ENCODE measurements at regions of chr11 and their contacts with region 1.

Region 1: GRCh38 chr11:113730887-113731726 is 25.0 kb upstream of the TMPRSS5 start:
- DNase-seq: peak; percentile 55
- H3K4me3 ChIP-seq: no peak overlapping the region
- H3K27ac ChIP-seq: no peak overlapping the region
- H3K4me1 ChIP-seq: peaks cover 19% of the 10 kb centered on the region
- H3K27me3 ChIP-seq: no peaks in the 10 kb centered on the region
- CTCF ChIP-seq: peak; percentile 67 to 85

Region 2: DNA sequence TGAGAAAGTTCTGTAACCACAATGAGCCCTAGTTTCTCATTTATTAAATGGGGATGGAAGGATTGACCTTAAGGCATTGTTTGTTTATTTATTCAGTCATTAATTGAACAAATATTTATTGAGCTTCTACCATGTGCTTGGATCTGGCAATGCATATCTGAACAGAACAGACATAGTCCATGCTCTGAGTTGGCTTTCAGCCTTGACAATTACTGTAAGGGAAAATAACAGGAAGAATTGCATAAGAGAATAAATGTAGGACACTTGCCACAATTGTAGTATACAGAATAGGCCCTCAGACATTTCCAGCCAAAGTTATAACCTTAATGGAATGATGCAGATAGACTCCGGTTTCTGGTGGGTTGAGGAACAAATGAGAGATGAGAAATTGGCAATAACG is 577.3 kb before region 1 on chr11:
- CTCF ChIA-PET with region 1: no interaction called
- dilution Hi-C with region 1: no loop called
- in situ Hi-C with region 1: no loop called
- intact Hi-C with region 1: no loop called
- DNase-seq: no peak
- H3K4me3 ChIP-seq: no peak overlapping the region
- H3K27ac ChIP-seq: no peak overlapping the region
- H3K4me1 ChIP-seq: no peaks in the 10 kb centered on the region
- H3K27me3 ChIP-seq: no peaks in the 10 kb centered on the region
- CTCF ChIP-seq: no peak

Region 3: GRCh38 chr11:113305440-113306336 is 425.4 kb before region 1 on chr11:
- CTCF ChIA-PET with region 1: no interaction called
- dilution Hi-C with region 1: no loop called
- in situ Hi-C with region 1: loop called (anchors 5 to 10 kb)
- intact Hi-C with region 1: loop called (anchors 1 kb)
- DNase-seq: peak; percentile 61
- H3K4me3 ChIP-seq: no peak overlapping the region
- H3K27ac ChIP-seq: no peak overlapping the region
- H3K4me1 ChIP-seq: peaks cover 13% of the 10 kb centered on the region
- H3K27me3 ChIP-seq: no peaks in the 10 kb centered on the region
- CTCF ChIP-seq: peak; percentile 99

Region 4: DNA sequence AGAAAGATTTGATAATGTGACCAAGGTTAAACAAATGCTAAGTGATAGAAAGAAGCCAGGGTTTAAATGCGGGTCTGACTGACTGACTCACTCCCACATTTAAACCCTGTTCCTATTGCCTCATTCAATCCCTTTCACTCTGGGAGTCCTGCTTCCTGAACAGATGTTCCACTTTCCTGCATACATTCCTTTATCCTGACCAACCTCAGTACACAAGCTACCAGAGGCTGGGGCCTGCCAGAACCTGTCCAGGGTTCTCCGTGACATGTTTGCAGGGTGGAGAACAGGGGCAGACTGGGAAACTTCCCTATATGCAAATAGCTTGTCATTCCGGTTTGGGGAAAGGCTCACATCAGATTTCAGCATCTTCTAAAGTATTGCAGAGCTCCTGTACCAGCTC is 346.6 kb before region 1 on chr11:
- CTCF ChIA-PET with region 1: interaction called, 6 read pairs
- dilution Hi-C with region 1: no loop called
- in situ Hi-C with region 1: no loop called
- intact Hi-C with region 1: loop called (anchors 2 kb)
- DNase-seq: peak; percentile 100
- H3K4me3 ChIP-seq: no peak overlapping the region
- H3K27ac ChIP-seq: peak overlapping the region; percentile 85
- H3K4me1 ChIP-seq: peaks cover 41% of the 10 kb centered on the region
- H3K27me3 ChIP-seq: no peaks in the 10 kb centered on the region
- CTCF ChIP-seq: no peak

Region 5: GRCh38 chr11:113532697-113533424 is 198.2 kb before region 1 on chr11:
- CTCF ChIA-PET with region 1: no interaction called
- dilution Hi-C with region 1: no loop called
- in situ Hi-C with region 1: loop called in 1 of 2 experiments (anchors 10 kb)
- intact Hi-C with region 1: loop called (anchors 1 kb)
- DNase-seq: peak; percentile 64
- H3K4me3 ChIP-seq: no peak overlapping the region
- H3K27ac ChIP-seq: no peak overlapping the region
- H3K4me1 ChIP-seq: peaks cover 40% of the 10 kb centered on the region
- H3K27me3 ChIP-seq: no peaks in the 10 kb centered on the region
- CTCF ChIP-seq: peak; percentile 93 to 96

Region 6: DNA sequence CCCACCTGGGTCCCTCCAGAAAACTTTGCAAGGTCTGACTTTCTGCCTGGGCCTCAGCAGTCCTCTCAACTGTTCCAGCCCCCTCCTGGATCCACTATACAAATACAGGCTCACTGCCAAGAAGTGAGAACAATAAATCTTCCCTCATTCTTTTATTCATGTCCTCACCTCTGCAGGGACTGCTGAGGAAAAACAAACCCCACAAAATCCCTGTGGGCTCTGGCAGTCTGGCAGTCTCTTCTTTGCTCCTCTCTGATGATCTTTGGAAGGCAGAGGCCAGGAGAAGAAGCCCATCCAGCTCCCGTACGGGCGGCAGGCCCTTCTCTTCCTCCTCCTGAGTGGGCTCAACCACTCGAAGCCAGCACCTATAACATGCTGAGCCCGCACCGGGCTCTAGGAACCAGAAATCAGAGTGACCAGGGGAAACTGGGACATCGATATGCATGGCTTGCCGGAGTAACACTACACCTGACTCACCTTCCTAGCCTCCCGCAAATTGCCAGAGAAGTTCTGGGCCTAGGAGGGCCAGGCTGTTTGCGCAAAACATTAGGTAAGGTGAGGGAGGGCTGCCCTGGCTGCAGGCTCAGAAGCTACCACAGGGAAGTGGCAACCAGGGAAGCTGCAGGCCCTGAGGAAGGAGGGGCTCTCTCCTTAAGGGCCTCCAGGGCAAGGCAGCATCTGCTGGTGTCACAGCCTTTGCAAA is 49.2 kb before region 1 on chr11:
- CTCF ChIA-PET with region 1: no interaction called
- dilution Hi-C with region 1: loop called (anchors 5 kb)
- in situ Hi-C with region 1: no loop called
- intact Hi-C with region 1: no loop called
- DNase-seq: no peak
- H3K4me3 ChIP-seq: no peak overlapping the region
- H3K27ac ChIP-seq: no peak overlapping the region
- H3K4me1 ChIP-seq: no peaks in the 10 kb centered on the region
- H3K27me3 ChIP-seq: no peaks in the 10 kb centered on the region
- CTCF ChIP-seq: no peak

Measured in mammary epithelial cell (primary cell).